ENCODE measurements at regions of chr6 and their contacts with region 1.

Region 1: DNA sequence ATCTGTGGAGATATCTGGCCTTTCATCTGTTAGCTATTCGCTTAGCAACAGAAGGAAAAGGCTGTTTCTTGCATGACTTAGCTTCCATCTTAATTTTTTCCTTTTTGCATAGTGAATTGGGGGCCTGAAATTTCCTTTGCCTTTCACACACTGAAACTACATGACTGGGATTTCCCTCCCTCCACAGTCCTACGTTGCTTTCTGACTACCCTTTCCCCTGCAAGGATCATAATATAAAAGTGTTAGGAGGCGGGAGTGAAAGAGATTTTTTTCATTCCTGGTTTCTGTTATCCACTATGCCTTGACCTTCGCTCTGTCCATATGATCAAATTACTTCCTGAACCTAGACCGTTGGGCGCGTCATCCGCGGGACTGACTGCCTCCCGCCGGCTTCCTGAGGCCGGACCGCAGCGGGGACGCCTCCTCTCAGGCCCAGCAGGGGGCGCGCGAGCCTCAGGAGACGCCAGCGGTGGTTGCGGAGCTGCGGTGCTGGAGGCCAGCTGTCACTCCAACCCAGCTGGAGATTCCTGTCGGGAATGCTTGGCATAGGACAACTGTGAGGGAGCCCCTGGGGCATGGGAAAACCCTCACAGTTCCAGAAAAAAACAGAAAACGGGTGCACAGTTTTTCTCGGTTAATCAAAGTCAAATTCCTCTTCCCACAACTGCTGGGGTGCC is 55.6 kb downstream of the MEP1A start:
- DNase-seq: no peak
- ATAC-seq: peak; percentile 96
- H3K4me3 ChIP-seq: no peak overlapping the region
- H3K27ac ChIP-seq: no peak overlapping the region
- H3K4me1 ChIP-seq: no peaks in the 10 kb centered on the region
- H3K27me3 ChIP-seq: no peaks in the 10 kb centered on the region; a peak in 1 of 4 replicates
- CTCF ChIP-seq: peak; percentile 79 to 94 (median 85)
- EP300 ChIP-seq: no peak
- POLR2A ChIP-seq: no peak
- RAD21 ChIP-seq: peak; percentile 68

Region 2: DNA sequence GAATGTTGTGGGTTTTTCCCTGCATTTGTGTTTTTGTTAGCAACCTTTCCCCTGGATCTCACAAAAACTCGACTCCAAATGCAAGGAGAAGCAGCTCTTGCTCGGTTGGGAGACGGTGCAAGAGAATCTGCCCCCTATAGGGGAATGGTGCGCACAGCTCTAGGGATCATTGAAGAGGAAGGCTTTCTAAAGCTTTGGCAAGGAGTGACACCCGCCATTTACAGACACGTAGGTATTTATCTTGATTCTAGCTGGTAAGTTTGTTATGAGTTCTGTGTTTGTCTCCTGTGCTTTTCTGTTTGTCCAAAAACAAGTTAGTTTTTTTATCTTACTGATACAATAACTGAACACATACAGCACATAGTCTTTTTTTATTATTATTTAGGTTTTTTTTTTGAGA is 193.0 kb before region 1 on chr6:
- CTCF ChIA-PET with region 1: no interaction called
- POLR2A ChIA-PET with region 1: no interaction called
- RAD21 ChIA-PET with region 1: no interaction called
- SMC1A ChIA-PET with region 1: no interaction called
- in situ Hi-C with region 1: no loop called
- intact Hi-C with region 1: no loop called
- DNase-seq: no peak
- ATAC-seq: no peak
- H3K4me3 ChIP-seq: no peak overlapping the region
- H3K27ac ChIP-seq: no peak overlapping the region
- H3K4me1 ChIP-seq: no peaks in the 10 kb centered on the region
- H3K27me3 ChIP-seq: peaks cover 2 to 13% of the 10 kb centered on the region in 2 experiments
- CTCF ChIP-seq: 0 out of 6 replicates have a peak, but pooled peaks of 1 of the 3 experiments have one; percentile 5
- EP300 ChIP-seq: no peak
- POLR2A ChIP-seq: no peak
- RAD21 ChIP-seq: no peak

Region 3: GRCh38 chr6:46983007-46983411 is 134.2 kb after region 1 on chr6:
- CTCF ChIA-PET with region 1: no interaction called
- POLR2A ChIA-PET with region 1: no interaction called
- RAD21 ChIA-PET with region 1: no interaction called
- SMC1A ChIA-PET with region 1: no interaction called
- in situ Hi-C with region 1: no loop called
- intact Hi-C with region 1: no loop called
- DNase-seq: no peak
- ATAC-seq: no peak
- H3K4me3 ChIP-seq: no peak overlapping the region
- H3K27ac ChIP-seq: no peak overlapping the region
- H3K4me1 ChIP-seq: no peaks in the 10 kb centered on the region
- H3K27me3 ChIP-seq: no peaks in the 10 kb centered on the region; a peak in 1 of 4 replicates
- CTCF ChIP-seq: no peak
- EP300 ChIP-seq: no peak
- POLR2A ChIP-seq: no peak
- RAD21 ChIP-seq: no peak

Region 4: DNA sequence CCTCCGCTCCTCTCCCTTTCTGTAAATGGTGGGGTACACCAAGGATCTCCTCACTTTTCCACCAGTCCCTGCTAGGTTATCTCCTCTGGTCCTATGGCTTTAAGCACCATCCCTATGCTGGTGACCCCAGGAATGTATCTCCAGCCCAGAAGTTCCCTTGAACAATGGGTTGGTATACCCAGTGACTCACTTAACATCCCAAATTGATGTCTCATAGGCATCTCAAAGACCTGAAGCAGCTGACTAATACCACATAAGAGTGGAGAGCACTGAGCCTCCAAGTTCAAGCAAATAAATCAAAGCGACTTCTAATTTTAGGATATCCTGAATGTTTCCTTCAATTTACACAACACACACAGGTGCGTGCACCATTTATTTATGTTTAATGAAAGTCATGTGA is 145.0 kb after region 1 on chr6:
- CTCF ChIA-PET with region 1: no interaction called
- POLR2A ChIA-PET with region 1: no interaction called
- RAD21 ChIA-PET with region 1: no interaction called
- SMC1A ChIA-PET with region 1: no interaction called
- in situ Hi-C with region 1: no loop called
- intact Hi-C with region 1: loop called (anchors 1 kb)
- DNase-seq: no peak
- ATAC-seq: no peak
- H3K4me3 ChIP-seq: no peak overlapping the region
- H3K27ac ChIP-seq: no peak overlapping the region
- H3K4me1 ChIP-seq: no peaks in the 10 kb centered on the region
- H3K27me3 ChIP-seq: no peaks in the 10 kb centered on the region
- CTCF ChIP-seq: no peak
- EP300 ChIP-seq: no peak
- POLR2A ChIP-seq: no peak
- RAD21 ChIP-seq: no peak

Region 5: DNA sequence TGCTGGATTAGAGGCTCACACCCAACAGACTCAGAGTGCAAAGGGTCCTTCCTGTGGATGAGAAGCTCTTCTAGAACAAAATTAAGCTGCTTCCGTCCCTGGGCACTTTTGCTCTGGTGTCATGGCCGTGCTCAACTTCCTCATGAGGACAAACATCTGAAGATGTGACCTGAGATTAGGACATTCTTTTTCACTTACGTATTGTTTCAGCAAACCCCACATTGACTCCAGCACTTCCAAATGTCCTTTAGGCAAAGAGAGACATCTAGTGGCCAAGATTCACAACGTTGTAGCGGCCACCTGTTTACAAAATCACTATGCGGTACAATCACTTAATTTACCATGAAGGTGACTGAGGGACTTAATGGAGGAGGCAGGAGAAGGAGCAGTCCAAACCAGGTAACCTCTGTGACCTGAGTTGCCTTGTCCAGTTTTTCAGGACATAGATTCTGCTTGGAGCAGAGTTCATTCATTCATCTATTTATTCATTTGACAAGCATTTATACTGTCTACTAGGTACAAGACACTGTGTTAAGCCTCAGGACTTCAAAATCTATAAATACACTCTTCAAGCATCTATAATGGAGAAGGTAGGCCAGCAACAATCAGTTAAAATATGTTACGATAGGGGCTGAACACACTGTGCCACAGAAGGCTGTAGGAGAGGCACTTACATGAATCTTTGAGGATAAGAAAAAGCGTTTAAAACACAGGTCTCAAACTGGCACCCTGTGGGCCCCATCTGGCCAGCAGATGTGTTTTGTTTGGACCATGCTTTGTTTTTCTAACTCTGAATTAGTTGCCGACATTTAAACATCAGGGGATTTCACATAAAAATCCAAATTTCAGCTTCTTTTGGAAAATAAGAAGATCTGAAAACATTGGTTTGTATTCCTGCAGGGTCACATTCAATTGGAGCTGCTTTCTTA is 198.9 kb after region 1 on chr6:
- CTCF ChIA-PET with region 1: interaction called, 25 read pairs
- POLR2A ChIA-PET with region 1: no interaction called
- RAD21 ChIA-PET with region 1: interaction called, 5 read pairs
- SMC1A ChIA-PET with region 1: no interaction called
- in situ Hi-C with region 1: loop called (anchors 10 kb)
- intact Hi-C with region 1: loop called (anchors 1 kb)
- DNase-seq: peak; percentile 11
- ATAC-seq: peak; percentile 91
- H3K4me3 ChIP-seq: no peak overlapping the region
- H3K27ac ChIP-seq: no peak overlapping the region
- H3K4me1 ChIP-seq: no peaks in the 10 kb centered on the region
- H3K27me3 ChIP-seq: peaks cover 2 to 3% of the 10 kb centered on the region in 2 experiments; a peak in 3 of 4 replicates
- CTCF ChIP-seq: peak; percentile 64 to 79 (median 76); a peak in 5 of 6 replicates
- EP300 ChIP-seq: no peak
- POLR2A ChIP-seq: no peak
- RAD21 ChIP-seq: peak; percentile 79

Region 6: GRCh38 chr6:47309291-47310130 is 460.7 kb after region 1 on chr6 and contains the start of gene TNFRSF21:
- CTCF ChIA-PET with region 1: no interaction called
- POLR2A ChIA-PET with region 1: no interaction called
- RAD21 ChIA-PET with region 1: interaction called, 4 read pairs
- SMC1A ChIA-PET with region 1: no interaction called
- in situ Hi-C with region 1: no loop called
- intact Hi-C with region 1: loop called (anchors 2 kb)
- DNase-seq: peak; percentile 32
- ATAC-seq: peak; percentile 98
- H3K4me3 ChIP-seq: peak within 1 kb of the TSS; percentile 65
- H3K27ac ChIP-seq: no peak within 1 kb of the TSS
- H3K4me1 ChIP-seq: no peaks in the 10 kb centered on the region
- H3K27me3 ChIP-seq: peaks cover 6 to 13% of the 10 kb centered on the region in 2 experiments; a peak in 3 of 4 replicates
- CTCF ChIP-seq: peak; percentile 94 to 98 (median 96)
- EP300 ChIP-seq: no peak
- POLR2A ChIP-seq: no peak
- RAD21 ChIP-seq: peak; percentile 93
- polyA plus RNA-seq, gene TNFRSF21: 0.09 to 0.11 TPM

Measured in GM12878 (cell line).